Naive thymus-derived CD4-positive, alpha-beta T cell (primary cell): ENCODE measurements at regions of chr5 and their contacts with region 1.

Region 1: GRCh38 chr5:62305715-62306322 is at the start of gene KIF2A:
- DNase-seq: peak; percentile 87 to 96 (median 94)
- ATAC-seq: peak; percentile 94
- H3K4me3 ChIP-seq: peak within 1 kb of the TSS; percentile 79
- H3K4me3 Mint-ChIP-seq: peak within 1 kb of the TSS; percentile 93 to 100 (median 98)
- H3K27ac ChIP-seq: peak within 1 kb of the TSS; percentile 81
- H3K27ac Mint-ChIP-seq: peak within 1 kb of the TSS; percentile 92 to 100 (median 98)
- H3K4me1 ChIP-seq: peaks cover 32 to 38% of the 10 kb centered on the region in 2 donors
- H3K4me1 Mint-ChIP-seq: peaks cover 27 to 60% (median 48%) of the 10 kb centered on the region in 7 donors
- H3K27me3 ChIP-seq: no peaks in the 10 kb centered on the region
- H3K27me3 Mint-ChIP-seq: no peaks in the 10 kb centered on the region
- total RNA-seq, gene KIF2A: 73.5 to 179 (median 142) TPM

Region 2: GRCh38 chr5:60944904-60945812 is 1360.7 kb before region 1 on chr5 and contains the starts of genes ERCC8 and NDUFAF2:
- CTCF ChIA-PET with region 1: no interaction called
- POLR2A ChIA-PET with region 1: interaction called, 3 read pairs
- intact Hi-C with region 1: loop called in 1 of 2 experiments (anchors 5 kb)
- DNase-seq: peak; percentile 72 to 90 (median 87)
- ATAC-seq: peak; percentile 99
- H3K4me3 ChIP-seq: peak within 1 kb of the TSS; percentile 86
- H3K4me3 Mint-ChIP-seq: no peak within 1 kb of the TSS
- H3K27ac ChIP-seq: peak within 1 kb of the TSS; percentile 69
- H3K27ac Mint-ChIP-seq: peak within 1 kb of the TSS in 2 of 9 donors; percentile 87 to 91
- H3K4me1 ChIP-seq: peaks cover 0 to 6% of the 10 kb centered on the region in 2 donors
- H3K4me1 Mint-ChIP-seq: peaks cover 16 to 40% (median 23%) of the 10 kb centered on the region in 7 donors
- H3K27me3 ChIP-seq: no peaks in the 10 kb centered on the region
- H3K27me3 Mint-ChIP-seq: no peaks in the 10 kb centered on the region
- total RNA-seq, gene ERCC8: 4.9 to 9.0 (median 8.0) TPM
- total RNA-seq, gene NDUFAF2: 7.0 to 19.4 (median 11.3) TPM

Region 3: DNA sequence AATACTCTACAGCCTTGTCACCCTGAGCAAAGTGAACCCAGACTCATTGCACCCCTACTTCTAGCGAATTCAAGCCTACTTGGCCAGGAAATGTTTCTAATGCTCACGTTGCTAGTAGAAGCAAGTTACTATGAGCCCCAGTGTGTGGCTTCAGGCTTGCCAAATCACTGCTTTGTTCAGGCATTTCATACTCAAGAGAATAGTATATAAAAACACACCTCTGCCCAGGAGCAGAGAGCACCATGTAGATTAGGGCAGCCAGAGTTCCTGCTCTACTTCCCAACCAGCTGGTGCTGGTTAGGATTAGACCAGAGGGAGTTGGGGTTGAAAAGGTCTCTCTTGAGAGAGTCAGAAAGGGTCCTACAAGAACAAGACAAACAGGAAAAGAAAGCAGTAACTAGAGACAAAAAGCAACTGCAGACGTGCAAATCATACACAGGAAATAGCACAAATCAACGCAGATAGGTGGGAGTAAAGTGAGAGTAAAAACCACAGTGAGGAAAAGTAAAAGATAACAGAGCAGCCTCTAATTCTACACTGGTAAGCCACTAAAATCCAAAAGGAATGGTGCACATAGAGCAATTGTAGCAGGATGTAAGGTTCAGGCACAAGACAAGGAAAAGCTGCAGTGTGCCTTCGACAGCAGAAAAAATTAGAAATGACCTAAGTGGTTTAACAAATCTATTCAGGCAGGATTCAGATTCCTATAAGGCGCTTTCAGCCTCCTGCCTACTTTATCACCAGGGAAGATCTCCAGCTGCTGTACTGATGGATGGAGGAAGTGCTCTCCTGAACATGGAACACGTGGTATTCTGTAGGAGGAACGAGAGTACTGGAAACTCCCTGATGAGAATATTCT is 49.4 kb before region 1 on chr5:
- CTCF ChIA-PET with region 1: interaction called, 3 read pairs
- POLR2A ChIA-PET with region 1: interaction called, 12 read pairs
- intact Hi-C with region 1: loop called (anchors 1 to 2 kb)
- DNase-seq: peak in 7 of 9 donors; percentile 16 to 77 (median 66)
- ATAC-seq: peak; percentile 82
- H3K4me3 ChIP-seq: peak overlapping the region; percentile 23
- H3K4me3 Mint-ChIP-seq: peak overlapping the region; percentile 59 to 91 (median 80)
- H3K27ac ChIP-seq: peak overlapping the region; percentile 70
- H3K27ac Mint-ChIP-seq: peak overlapping the region; percentile 87 to 99 (median 95)
- H3K4me1 ChIP-seq: peaks cover 12 to 37% of the 10 kb centered on the region in 2 donors
- H3K4me1 Mint-ChIP-seq: peaks cover 39 to 87% (median 83%) of the 10 kb centered on the region in 7 donors
- H3K27me3 ChIP-seq: no peaks in the 10 kb centered on the region
- H3K27me3 Mint-ChIP-seq: no peaks in the 10 kb centered on the region

Region 4: DNA sequence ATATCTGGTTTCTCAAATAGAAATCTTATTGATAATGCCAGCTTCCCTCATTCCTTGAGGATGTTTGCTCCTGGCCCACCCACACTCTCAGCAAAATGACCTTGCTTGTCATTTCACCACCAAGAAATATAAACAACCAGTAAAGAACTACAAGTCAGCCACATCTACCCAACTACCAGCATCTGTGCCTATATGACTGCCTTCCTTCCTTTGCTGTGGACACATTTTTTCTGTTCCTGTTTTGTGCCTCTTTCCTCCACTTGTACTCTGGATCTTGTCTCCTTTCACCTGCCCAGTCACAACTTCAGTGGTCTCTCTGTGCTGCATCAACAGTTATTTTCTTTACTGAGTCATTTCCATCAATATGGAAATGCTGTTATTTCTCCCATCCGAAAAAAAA is 20.5 kb after region 1 on chr5:
- CTCF ChIA-PET with region 1: interaction called, 4 read pairs
- POLR2A ChIA-PET with region 1: interaction called, 3 read pairs
- intact Hi-C with region 1: loop called (anchors 1 to 2 kb)
- DNase-seq: no peak
- ATAC-seq: no peak
- H3K4me3 ChIP-seq: no peak overlapping the region
- H3K4me3 Mint-ChIP-seq: peak overlapping the region in 8 of 10 donors; percentile 2 to 43 (median 25)
- H3K27ac ChIP-seq: peak overlapping the region; percentile 31
- H3K27ac Mint-ChIP-seq: peak overlapping the region; percentile 21 to 81 (median 38)
- H3K4me1 ChIP-seq: peaks cover 12 to 34% of the 10 kb centered on the region in 2 donors
- H3K4me1 Mint-ChIP-seq: peaks cover 48 to 87% (median 82%) of the 10 kb centered on the region in 7 donors
- H3K27me3 ChIP-seq: no peaks in the 10 kb centered on the region
- H3K27me3 Mint-ChIP-seq: no peaks in the 10 kb centered on the region

Region 5: DNA sequence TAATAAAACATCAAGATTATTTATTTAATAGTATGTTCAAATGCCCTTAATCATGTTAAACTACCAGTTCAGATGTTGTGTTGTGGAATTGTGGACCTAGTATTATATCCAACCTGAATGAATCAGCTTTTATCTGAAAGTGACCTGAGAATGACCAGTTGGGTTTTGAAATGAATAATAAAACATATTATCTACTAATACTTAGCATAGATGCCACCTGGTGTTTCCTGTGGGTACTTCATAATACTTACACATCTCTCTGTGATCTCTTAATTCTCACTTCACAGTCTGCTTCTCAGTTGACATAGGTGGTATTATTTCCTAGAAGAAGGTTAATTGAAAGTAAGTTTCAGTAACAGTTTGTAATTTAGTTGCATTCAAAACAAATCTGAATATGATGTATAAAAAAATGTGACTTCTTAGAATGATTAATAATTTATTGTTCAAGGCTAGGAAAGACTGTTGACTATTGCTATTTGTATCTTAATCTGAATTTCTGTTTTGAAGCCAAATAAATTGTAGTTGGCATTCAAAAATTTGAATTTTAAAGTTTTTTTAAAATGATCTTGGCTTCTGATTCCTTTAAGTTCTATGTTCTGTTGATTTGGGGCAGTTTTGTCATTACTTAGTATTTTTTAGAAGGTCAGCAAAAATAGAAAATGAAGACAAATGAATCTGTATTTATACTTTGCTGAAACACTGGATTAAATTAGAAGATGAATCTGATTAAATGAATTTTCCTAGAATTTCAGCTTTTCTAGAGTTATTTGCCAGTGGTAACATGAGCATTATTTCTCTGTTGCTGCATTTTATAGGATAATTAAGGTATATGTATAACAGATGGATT is 48.4 kb after region 1 on chr5:
- CTCF ChIA-PET with region 1: interaction called, 10 read pairs
- POLR2A ChIA-PET with region 1: interaction called, 5 read pairs
- intact Hi-C with region 1: loop called (anchors 1 to 2 kb)
- DNase-seq: peak in 7 of 9 donors; percentile 28 to 53 (median 44)
- ATAC-seq: peak; percentile 73
- H3K4me3 ChIP-seq: no peak overlapping the region
- H3K4me3 Mint-ChIP-seq: no peak overlapping the region
- H3K27ac ChIP-seq: no peak overlapping the region
- H3K27ac Mint-ChIP-seq: peak overlapping the region in 4 of 9 donors; percentile 12 to 40 (median 28)
- H3K4me1 ChIP-seq: no peaks in the 10 kb centered on the region
- H3K4me1 Mint-ChIP-seq: peaks cover 0 to 22% (median 5%) of the 10 kb centered on the region in 7 donors
- H3K27me3 ChIP-seq: no peaks in the 10 kb centered on the region
- H3K27me3 Mint-ChIP-seq: no peaks in the 10 kb centered on the region

Region 6: DNA sequence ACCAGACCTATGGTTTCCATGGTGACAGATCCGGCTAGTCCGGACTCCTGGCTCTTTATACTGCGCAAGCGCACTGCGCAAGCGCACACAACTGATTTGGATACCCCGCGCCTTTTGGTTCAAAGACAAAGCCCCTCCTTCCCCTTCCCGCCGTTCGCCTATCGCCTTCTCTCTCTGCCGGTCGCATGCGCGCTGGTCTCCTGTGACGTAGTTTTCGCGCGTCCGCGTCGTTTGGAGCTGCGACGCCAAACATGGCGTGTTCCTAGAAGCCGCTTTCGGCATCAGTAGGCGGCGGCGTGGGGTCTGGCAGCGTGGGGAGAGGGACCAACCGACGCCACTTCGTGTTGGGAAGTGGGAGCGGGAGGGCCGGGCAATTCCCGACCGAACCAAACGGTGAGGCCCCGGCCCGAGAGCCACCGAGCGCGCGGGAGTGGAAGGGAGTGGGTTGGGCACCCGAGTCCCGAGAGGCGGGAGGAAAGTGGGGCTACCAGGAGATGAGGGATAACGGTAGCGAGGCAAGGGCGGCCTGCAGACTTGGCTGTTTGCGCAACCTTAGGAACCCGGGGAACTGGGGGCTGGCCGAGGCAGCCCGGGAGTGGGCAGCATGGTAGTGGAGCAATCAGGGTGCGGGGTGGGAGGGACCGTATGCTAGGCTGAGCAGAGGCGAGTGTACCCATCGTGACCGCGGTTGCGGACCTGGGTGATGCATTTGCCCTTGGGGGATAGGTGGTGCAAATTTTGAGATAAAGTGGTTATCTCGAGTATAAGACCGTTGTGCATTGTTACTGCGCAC is 106.9 kb after region 1 on chr5 and contains the start of gene IPO11:
- CTCF ChIA-PET with region 1: no interaction called
- POLR2A ChIA-PET with region 1: no interaction called
- intact Hi-C with region 1: loop called (anchors 1 kb)
- DNase-seq: peak; percentile 97 to 98 (median 98)
- ATAC-seq: peak; percentile 96
- H3K4me3 ChIP-seq: peak within 1 kb of the TSS; percentile 91
- H3K4me3 Mint-ChIP-seq: peak within 1 kb of the TSS; percentile 81 to 97 (median 92)
- H3K27ac ChIP-seq: peak within 1 kb of the TSS; percentile 80
- H3K27ac Mint-ChIP-seq: peak within 1 kb of the TSS; percentile 87 to 96 (median 93)
- H3K4me1 ChIP-seq: peaks cover 11 to 12% of the 10 kb centered on the region in 2 donors
- H3K4me1 Mint-ChIP-seq: peaks cover 8 to 39% (median 29%) of the 10 kb centered on the region in 7 donors
- H3K27me3 ChIP-seq: no peaks in the 10 kb centered on the region
- H3K27me3 Mint-ChIP-seq: peaks cover 0 to 7% (median 0%) of the 10 kb centered on the region in 5 donors
- total RNA-seq, gene IPO11: 22.1 to 29.0 (median 27.7) TPM